ENCODE measurements at regions of chr11 and their contacts with region 1.

Region 1: DNA sequence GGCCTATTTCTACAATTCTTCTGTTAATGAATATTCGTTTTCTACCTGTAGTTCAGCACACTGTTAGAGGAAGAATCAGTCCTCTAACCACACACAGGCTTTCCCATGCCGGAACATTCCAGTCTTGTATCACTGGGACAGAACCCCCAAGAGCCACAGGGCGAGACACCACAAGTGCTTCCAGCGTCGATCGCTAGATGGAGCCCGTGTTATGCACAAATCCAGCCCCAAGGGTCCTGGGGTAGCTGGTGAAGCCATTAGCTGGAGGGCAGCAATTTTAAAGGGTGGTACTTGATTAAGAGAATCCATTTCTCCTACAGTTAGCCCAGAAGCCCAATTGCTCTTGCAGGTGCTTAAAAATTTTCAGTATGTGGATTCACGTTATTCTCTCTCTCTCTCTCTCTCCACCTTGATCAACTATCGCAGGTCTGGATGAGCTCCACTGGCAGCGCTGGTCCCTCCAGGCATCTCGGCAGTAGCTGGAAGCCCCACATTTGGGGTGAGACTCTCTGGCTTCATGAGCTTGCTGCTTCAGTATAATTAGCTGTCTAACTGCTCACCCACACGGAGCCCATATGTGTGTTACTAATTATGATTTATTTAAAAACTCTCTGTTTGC is 148.2 kb upstream of the SNX19 start:
- DNase-seq: peak in 5 of 6 donors; percentile 11 to 74 (median 53)
- ATAC-seq: peak in 3 of 4 donors; percentile 80 to 85 (median 81)
- H3K4me3 ChIP-seq: no peak overlapping the region
- H3K27ac ChIP-seq: no peak overlapping the region
- H3K4me1 ChIP-seq: no peaks in the 10 kb centered on the region
- H3K27me3 ChIP-seq: peaks cover 0 to 7% (median 0%) of the 10 kb centered on the region in 4 donors
- CTCF ChIP-seq: peak; percentile 34 to 74 (median 65)

Region 2: DNA sequence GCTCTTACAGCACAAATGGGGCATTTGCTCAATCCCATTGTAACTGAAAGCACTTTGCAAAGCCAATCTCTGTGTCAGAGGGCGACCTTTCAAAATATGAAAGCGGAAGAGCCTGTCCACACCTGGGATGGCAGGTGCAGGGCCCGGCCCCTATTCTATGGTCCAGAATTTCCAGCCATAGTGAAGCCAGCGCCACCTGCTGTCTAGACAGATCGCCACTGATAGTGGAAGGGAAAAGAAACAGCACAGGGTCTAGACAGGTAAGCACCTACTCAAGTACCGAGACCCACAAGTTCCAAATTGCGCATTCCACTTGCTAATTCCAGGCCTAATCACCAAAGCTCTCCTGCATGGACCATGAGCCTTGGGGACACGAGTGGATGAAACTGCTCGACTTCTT is 447.3 kb after region 1 on chr11:
- intact Hi-C with region 1: loop called in 1 of 3 experiments (anchors 5 kb)
- DNase-seq: peak in 5 of 6 donors; percentile 41 to 80 (median 51)
- ATAC-seq: peak; percentile 50 to 98 (median 88)
- H3K4me3 ChIP-seq: no peak overlapping the region
- H3K27ac ChIP-seq: no peak overlapping the region
- H3K4me1 ChIP-seq: no peaks in the 10 kb centered on the region
- H3K27me3 ChIP-seq: no peaks in the 10 kb centered on the region
- CTCF ChIP-seq: peak; percentile 15 to 59 (median 53)

Region 3: GRCh38 chr11:131674051-131674755 is 609.7 kb after region 1 on chr11:
- intact Hi-C with region 1: loop called in 1 of 3 experiments (anchors 5 kb)
- DNase-seq: peak; percentile 32 to 89 (median 74)
- ATAC-seq: peak; percentile 91 to 97 (median 96)
- H3K4me3 ChIP-seq: no peak overlapping the region
- H3K27ac ChIP-seq: no peak overlapping the region
- H3K4me1 ChIP-seq: no peaks in the 10 kb centered on the region
- H3K27me3 ChIP-seq: no peaks in the 10 kb centered on the region
- CTCF ChIP-seq: peak; percentile 82 to 94 (median 88)